WTC11 (cell line): ENCODE measurements at regions of chr12 and their contacts with region 1.

Region 1: GRCh38 chr12:112992541-112993398 is 14.5 kb downstream of the OAS2 start:
- DNase-seq: peak; percentile 83
- ATAC-seq: peak; percentile 87
- H3K4me3 Mint-ChIP-seq: no peak overlapping the region
- H3K27ac Mint-ChIP-seq: no peak overlapping the region
- H3K4me1 Mint-ChIP-seq: peaks cover 16% of the 10 kb centered on the region
- H3K27me3 Mint-ChIP-seq: peaks cover 8% of the 10 kb centered on the region
- CTCF ChIP-seq: peak; percentile 83

Region 2: GRCh38 chr12:112664569-112664968 is 328.2 kb before region 1 on chr12:
- CTCF ChIA-PET with region 1: no interaction called
- POLR2A ChIA-PET with region 1: no interaction called
- DNase-seq: peak; percentile 56
- ATAC-seq: 0 out of 2 replicates have a peak, but pooled peaks have one; percentile 39
- H3K4me3 Mint-ChIP-seq: no peak overlapping the region
- H3K27ac Mint-ChIP-seq: no peak overlapping the region
- H3K4me1 Mint-ChIP-seq: no peaks in the 10 kb centered on the region
- H3K27me3 Mint-ChIP-seq: peaks cover 28% of the 10 kb centered on the region
- CTCF ChIP-seq: no peak

Region 3: GRCh38 chr12:112768278-112768677 is 224.5 kb before region 1 on chr12:
- CTCF ChIA-PET with region 1: no interaction called
- POLR2A ChIA-PET with region 1: no interaction called
- DNase-seq: no peak
- ATAC-seq: no peak
- H3K4me3 Mint-ChIP-seq: no peak overlapping the region
- H3K27ac Mint-ChIP-seq: no peak overlapping the region
- H3K4me1 Mint-ChIP-seq: peaks cover 7% of the 10 kb centered on the region
- H3K27me3 Mint-ChIP-seq: no peaks in the 10 kb centered on the region
- CTCF ChIP-seq: no peak

Region 4: DNA sequence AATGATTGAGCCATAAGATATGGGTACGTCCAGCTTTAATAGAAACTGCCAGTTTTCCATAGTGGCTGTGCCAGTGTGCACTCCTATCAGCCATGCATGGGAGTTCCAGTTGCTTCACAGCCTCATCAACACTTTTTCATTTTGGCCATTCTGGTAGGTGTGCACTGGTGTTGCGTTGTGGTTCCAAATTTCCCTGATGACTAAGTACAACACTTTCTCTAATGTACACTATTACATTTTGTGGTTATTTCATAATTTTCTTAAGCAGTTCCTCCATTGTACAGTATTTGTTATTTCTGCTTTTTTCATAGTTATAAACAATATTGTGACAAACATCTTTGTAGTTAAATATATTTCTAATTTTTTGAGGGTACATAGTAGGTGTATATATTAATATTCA is 107.5 kb before region 1 on chr12:
- CTCF ChIA-PET with region 1: no interaction called
- POLR2A ChIA-PET with region 1: no interaction called
- DNase-seq: no peak
- ATAC-seq: no peak
- H3K4me3 Mint-ChIP-seq: no peak overlapping the region
- H3K27ac Mint-ChIP-seq: no peak overlapping the region
- H3K4me1 Mint-ChIP-seq: no peaks in the 10 kb centered on the region
- H3K27me3 Mint-ChIP-seq: no peaks in the 10 kb centered on the region; the same call in 1 of the 2 replicates
- CTCF ChIP-seq: no peak

Region 5: DNA sequence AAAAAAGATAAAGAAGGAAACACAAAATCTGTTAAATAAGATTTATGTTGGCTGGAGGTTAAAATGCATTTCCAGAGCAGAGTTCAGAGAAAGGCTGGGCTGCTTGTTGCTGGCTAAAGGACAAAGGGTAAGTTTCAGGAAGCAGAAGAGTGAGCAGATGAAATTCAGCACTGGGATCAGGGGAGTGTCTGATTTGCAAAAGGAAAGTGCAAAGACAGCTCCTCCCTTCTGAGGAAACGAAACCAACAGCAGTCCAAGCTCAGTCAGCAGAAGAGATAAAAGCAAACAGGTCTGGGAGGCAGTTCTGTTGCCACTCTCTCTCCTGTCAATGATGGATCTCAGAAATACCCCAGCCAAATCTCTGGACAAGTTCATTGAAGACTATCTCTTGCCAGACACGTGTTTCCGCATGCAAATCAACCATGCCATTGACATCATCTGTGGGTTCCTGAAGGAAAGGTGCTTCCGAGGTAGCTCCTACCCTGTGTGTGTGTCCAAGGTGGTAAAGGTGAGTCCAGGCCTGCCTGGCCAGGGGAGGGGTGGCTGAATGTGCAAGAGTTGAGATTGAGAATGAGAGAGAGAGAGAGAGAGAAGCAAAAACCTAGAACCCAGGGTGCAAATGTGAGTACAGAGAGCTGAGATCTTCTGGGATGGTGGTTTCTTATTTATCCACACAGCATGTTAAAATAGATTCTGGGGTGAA is 85.9 kb before region 1 on chr12 and contains the start of gene OAS1:
- CTCF ChIA-PET with region 1: interaction called, 11 read pairs
- POLR2A ChIA-PET with region 1: no interaction called
- DNase-seq: no peak
- ATAC-seq: no peak
- H3K4me3 Mint-ChIP-seq: no peak within 1 kb of the TSS
- H3K27ac Mint-ChIP-seq: no peak within 1 kb of the TSS
- H3K4me1 Mint-ChIP-seq: peaks cover 11% of the 10 kb centered on the region
- H3K27me3 Mint-ChIP-seq: peaks cover 4% of the 10 kb centered on the region
- CTCF ChIP-seq: no peak
- total RNA-seq, gene OAS1: 0.24 to 0.30 TPM (median 0.27 TPM) in 3 replicates

Region 6: GRCh38 chr12:113005754-113006153 is 13.0 kb after region 1 on chr12:
- CTCF ChIA-PET with region 1: interaction called, 52 read pairs
- POLR2A ChIA-PET with region 1: no interaction called
- DNase-seq: no peak
- ATAC-seq: no peak
- H3K4me3 Mint-ChIP-seq: no peak overlapping the region
- H3K27ac Mint-ChIP-seq: no peak overlapping the region
- H3K4me1 Mint-ChIP-seq: no peaks in the 10 kb centered on the region
- H3K27me3 Mint-ChIP-seq: peaks cover 3% of the 10 kb centered on the region; the same call in 1 of the 2 replicates
- CTCF ChIP-seq: no peak

Region 7: GRCh38 chr12:113030875-113031525 is 38.2 kb after region 1 on chr12:
- CTCF ChIA-PET with region 1: interaction called, 40 read pairs
- POLR2A ChIA-PET with region 1: no interaction called
- DNase-seq: peak; percentile 41
- ATAC-seq: peak; percentile 100
- H3K4me3 Mint-ChIP-seq: no peak overlapping the region
- H3K27ac Mint-ChIP-seq: no peak overlapping the region
- H3K4me1 Mint-ChIP-seq: peaks cover 6% of the 10 kb centered on the region
- H3K27me3 Mint-ChIP-seq: peaks cover 7% of the 10 kb centered on the region
- CTCF ChIP-seq: peak; percentile 43

Region 8: GRCh38 chr12:113092607-113093408 is 100.0 kb after region 1 on chr12:
- CTCF ChIA-PET with region 1: interaction called, 37 read pairs
- POLR2A ChIA-PET with region 1: no interaction called
- DNase-seq: peak; percentile 89
- ATAC-seq: peak; percentile 91
- H3K4me3 Mint-ChIP-seq: peak overlapping the region; percentile 80
- H3K27ac Mint-ChIP-seq: peak overlapping the region; percentile 70
- H3K4me1 Mint-ChIP-seq: peaks cover 11% of the 10 kb centered on the region
- H3K27me3 Mint-ChIP-seq: no peaks in the 10 kb centered on the region; the same call in none of the 2 replicates
- CTCF ChIP-seq: no peak

Region 9: DNA sequence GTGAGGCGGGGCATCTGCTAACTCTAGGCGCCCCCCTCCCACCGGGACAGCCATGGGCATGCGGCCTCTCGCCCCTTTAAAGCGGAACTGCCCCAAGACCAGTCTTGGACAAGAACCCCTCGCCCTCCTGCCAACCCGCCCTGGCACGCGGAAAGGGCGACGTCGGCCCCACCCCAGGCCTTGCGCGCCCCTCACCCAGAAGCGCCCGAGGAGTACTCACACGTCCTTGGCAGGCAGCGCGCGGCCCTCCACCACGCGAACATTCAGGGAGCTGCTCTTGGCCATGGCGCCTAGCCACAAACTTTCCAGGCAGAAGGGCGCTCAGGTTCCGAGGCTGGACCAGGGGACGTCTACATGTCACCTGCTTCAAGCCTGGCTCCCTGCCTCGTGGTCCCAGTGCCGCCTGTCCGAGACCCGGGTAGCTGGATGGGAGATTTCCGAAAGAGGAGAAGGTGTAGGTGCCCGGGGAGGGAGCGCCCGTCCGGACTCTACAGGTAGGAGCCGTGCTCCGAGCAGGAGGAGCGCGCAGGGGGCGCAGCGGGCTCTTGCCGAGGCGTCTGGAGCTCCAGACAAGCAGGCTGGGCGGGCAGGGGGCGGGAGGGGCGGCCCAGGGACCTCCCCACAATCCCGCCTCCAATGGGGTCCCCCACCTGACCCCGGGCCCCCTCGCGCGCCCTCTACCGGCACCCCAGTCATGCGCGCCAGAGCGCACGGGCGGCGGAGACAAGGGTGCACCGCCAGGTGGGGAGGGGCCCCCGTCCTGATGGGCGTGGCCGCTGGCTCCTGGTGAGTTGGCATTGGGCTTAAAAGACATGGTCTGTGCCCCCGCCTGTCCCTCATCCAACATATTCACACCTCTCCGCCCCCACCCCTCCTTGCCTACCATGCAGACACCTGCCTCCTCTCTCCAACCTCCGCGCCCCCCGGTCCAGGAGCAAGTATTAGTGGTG is 142.7 kb after region 1 on chr12 and contains the start of gene RASAL1:
- CTCF ChIA-PET with region 1: interaction called, 13 read pairs
- POLR2A ChIA-PET with region 1: no interaction called
- DNase-seq: peak; percentile 94
- ATAC-seq: peak; percentile 89
- H3K4me3 Mint-ChIP-seq: peak within 1 kb of the TSS; percentile 74
- H3K27ac Mint-ChIP-seq: 0 out of 2 replicates have a peak within 1 kb of the TSS, but pooled peaks have one; percentile 20
- H3K4me1 Mint-ChIP-seq: peaks cover 18% of the 10 kb centered on the region
- H3K27me3 Mint-ChIP-seq: peaks cover 26% of the 10 kb centered on the region
- CTCF ChIP-seq: peak; percentile 81
- total RNA-seq, gene RASAL1: 6.9 to 8.1 TPM (median 8.0 TPM) in 3 replicates

Region 10: GRCh38 chr12:113174461-113175384 is 182.0 kb after region 1 on chr12:
- CTCF ChIA-PET with region 1: interaction called, 13 read pairs
- POLR2A ChIA-PET with region 1: no interaction called
- DNase-seq: peak; percentile 86
- ATAC-seq: peak; percentile 88
- H3K4me3 Mint-ChIP-seq: no peak overlapping the region
- H3K27ac Mint-ChIP-seq: peak overlapping the region; percentile 90
- H3K4me1 Mint-ChIP-seq: no peaks in the 10 kb centered on the region
- H3K27me3 Mint-ChIP-seq: no peaks in the 10 kb centered on the region
- CTCF ChIP-seq: peak; percentile 99